Motor neuron (in vitro differentiated cells): ENCODE measurements at regions of chr11 and their contacts with region 1.

Region 1: GRCh38 chr11:14643697-14644225 is at the start of gene PDE3B:
- ATAC-seq: peak; percentile 79 to 92 (median 90)
- H3K4me3 ChIP-seq: peak within 1 kb of the TSS; percentile 72 to 97 (median 94)
- H3K27ac ChIP-seq: peak within 1 kb of the TSS; percentile 79 to 84
- H3K4me1 ChIP-seq: peaks cover 10 to 38% of the 10 kb centered on the region in 2 donors
- total RNA-seq, gene PDE3B: 3.3 to 52.9 (median 13.1) TPM

Region 2: DNA sequence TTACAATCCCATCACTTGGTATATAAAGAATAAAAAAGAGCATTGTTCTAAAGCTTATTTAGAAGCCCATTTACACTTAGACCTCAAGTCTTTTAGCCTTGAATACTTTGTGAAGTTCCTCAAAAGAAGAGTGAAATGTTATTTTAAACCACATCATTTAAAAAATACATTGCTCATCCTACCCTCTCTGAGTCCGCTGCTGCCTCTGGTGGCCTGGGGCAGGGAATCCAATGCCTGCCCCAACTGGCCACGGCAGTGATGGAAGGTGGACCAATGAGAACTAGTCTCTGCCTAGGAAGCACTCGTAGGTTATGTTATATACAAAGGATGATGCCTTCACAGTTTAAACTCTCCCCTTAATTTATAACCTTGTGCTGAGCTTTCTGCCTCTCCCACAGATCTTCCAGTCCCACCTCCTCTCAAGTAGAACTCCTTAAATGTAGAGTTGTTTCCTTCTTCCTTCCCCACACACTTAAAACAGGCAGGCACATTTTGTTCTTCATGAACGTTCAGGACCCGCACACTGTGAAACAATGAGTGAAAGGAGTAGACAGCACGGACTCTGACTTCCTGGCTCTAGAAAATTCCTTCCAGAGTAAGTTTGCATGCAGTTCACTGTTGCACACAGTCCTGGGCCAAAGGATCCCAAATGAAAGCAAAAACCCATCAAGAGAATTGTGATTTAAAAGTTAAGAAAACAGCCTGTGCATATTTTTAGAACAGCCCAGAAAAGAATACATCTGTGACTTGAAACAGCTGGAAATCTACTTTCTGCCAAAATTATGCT is 452.6 kb before region 1 on chr11:
- in situ Hi-C with region 1: no loop called
- ATAC-seq: peak in 1 of 8 experiments; percentile 19
- H3K4me3 ChIP-seq: no peak overlapping the region
- H3K27ac ChIP-seq: no peak overlapping the region
- H3K4me1 ChIP-seq: peaks cover 2 to 21% of the 10 kb centered on the region in 2 donors

Region 3: DNA sequence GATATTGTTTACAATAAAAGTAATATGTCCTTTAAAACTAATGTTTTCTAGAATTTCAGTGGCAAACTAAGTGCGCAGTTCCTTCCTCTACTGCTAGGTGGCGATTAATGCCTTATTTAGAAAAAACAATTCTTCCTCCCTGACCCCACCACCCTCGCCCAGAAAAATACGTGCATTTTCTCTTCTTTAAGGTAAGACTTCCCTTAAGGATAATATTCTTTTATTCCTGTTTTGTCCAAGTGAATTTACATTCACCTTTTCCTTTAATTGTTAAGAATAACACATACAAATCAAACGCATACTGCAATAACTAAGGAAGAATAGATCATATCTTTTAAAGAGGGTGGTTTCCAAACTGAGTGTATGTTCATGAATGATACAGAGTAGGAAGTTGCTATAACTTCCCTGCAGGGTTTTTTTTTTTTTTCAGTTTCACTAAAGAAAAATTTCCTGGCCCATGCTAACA is 106.6 kb before region 1 on chr11:
- in situ Hi-C with region 1: loop called in 1 of 9 experiments (anchors 25 kb)
- ATAC-seq: peak in 3 of 8 experiments; percentile 6 to 15 (median 7)
- H3K4me3 ChIP-seq: no peak overlapping the region
- H3K27ac ChIP-seq: no peak overlapping the region
- H3K4me1 ChIP-seq: no peaks in the 10 kb centered on the region

Region 4: DNA sequence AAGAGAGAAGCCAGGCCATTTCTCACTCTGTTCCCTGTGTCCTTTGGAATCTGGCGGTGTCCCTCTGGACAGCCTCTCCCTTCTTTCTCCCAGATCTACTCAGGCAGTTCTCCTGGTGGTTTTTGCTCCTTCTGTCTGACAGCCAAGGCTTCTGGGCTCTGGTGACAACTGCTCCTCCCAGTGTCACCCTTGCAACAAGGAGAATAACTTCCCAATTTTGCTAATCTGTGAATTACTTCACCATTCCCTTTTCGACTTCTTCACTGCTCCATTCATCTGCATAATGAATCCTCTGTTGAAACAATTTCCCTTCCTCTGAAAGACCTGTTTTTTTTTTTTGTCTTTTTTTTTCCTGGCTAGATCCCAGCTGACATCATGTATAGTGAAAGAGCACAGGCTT is 56.5 kb before region 1 on chr11:
- in situ Hi-C with region 1: no loop called
- ATAC-seq: peak in 2 of 8 experiments; percentile 8 to 9
- H3K4me3 ChIP-seq: no peak overlapping the region
- H3K27ac ChIP-seq: no peak overlapping the region
- H3K4me1 ChIP-seq: no peaks in the 10 kb centered on the region